Lower leg skin (tissue), 4 donors: ENCODE measurements at regions of chr2 and their contacts with region 1.

Region 1: DNA sequence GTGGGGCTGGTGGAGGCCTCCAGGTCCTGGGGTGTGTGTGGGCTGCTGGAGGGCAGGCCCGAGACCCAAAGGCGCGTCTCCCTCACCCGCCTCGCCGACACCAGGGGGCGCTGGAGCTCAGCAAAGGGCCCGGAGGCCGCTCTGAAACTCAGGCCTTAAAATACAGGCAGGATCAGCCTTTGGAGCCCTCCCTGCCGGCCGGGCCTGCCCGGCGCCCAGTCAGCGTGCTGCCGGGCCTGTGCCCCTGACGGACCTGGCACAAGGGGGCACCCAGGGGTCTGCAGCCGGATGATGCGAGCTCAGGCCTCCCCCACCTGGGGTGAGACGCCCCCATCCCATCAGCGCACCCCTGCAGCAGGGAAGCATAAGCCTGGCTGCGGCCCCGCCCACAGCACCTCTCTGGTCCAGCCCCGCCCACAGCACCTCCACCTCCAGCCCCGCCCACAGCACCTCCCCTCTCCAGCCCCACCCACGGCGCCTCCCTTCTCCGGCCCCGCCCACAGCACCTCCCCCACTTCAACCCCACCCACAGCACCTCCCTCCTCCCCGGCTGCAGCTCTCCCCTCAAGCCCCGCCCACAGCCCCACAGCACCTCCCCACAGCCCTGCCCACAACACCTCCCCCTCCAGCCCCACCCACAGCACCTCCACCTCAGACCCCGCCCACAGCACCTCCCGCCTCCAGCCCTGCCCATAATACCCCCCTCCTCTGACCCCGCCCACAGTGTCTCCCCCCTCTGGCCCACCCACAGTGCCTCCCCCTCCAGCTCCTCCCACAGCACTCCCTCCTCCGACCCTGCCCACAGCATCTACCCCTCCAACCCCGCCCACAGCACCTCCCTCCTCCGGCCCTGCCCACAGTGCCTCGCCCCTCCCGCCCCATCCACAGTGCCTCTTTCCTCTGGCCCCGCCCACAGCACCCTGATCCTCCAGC is 92.8 kb upstream of the OTOS start:
- DNase-seq: peak; percentile 72 to 95
- H3K4me3 ChIP-seq: no peak overlapping the region
- CTCF ChIP-seq: peak in 1 of 3 donors; percentile 81
- POLR2A ChIP-seq: no peak

Region 2: GRCh38 chr2:239569401-239570090 is 663.7 kb before region 1 on chr2:
- intact Hi-C with region 1: loop called (anchors 5 kb)
- DNase-seq: no peak
- H3K4me3 ChIP-seq: no peak overlapping the region
- CTCF ChIP-seq: no peak
- POLR2A ChIP-seq: no peak

Region 3: GRCh38 chr2:240277073-240277806 is 44.0 kb after region 1 on chr2:
- intact Hi-C with region 1: no loop called
- DNase-seq: no peak
- H3K4me3 ChIP-seq: no peak overlapping the region
- CTCF ChIP-seq: no peak
- POLR2A ChIP-seq: no peak

Region 4: GRCh38 chr2:240369801-240370585 is 136.8 kb after region 1 on chr2:
- intact Hi-C with region 1: no loop called
- DNase-seq: no peak
- H3K4me3 ChIP-seq: no peak overlapping the region
- CTCF ChIP-seq: no peak
- POLR2A ChIP-seq: no peak

Region 5: GRCh38 chr2:240434728-240435456 is 201.7 kb after region 1 on chr2:
- intact Hi-C with region 1: loop called (anchors 5 kb)
- DNase-seq: peak; percentile 87 to 98
- H3K4me3 ChIP-seq: peak overlapping the region; percentile 46
- CTCF ChIP-seq: no peak
- POLR2A ChIP-seq: no peak